ENCODE measurements at regions of chr1 and their contacts with region 1.

Region 1: DNA sequence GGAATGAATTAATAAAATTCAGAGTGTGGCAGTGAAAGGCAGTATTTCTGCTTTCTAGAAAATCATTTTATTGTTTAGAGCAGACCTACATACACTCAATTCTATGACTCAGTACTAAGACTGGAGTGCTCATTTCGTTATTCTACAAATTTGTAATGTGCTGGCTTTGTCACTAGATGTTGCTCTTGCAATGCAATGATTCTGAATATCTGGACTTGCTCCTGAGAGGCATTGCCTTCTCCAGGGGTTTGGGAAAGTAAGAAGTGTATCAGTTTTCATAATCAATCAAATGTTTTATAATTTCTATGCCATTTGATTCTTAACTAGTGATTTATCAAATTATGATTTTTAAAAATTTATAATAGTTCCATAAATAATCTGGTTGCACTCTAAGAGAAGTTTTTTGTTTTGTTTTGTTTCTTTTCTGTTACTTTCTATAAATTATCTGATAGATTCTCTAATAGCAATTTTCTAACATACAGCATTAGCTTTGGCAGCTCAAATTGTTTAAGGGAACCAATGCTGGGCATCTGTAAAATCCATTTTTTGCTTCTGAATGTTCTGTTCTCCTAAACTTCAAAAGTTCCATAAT is 280.5 kb upstream of the SGIP1 start:
- DNase-seq: peak; percentile 59
- CTCF ChIP-seq: peak; percentile 75

Region 2: DNA sequence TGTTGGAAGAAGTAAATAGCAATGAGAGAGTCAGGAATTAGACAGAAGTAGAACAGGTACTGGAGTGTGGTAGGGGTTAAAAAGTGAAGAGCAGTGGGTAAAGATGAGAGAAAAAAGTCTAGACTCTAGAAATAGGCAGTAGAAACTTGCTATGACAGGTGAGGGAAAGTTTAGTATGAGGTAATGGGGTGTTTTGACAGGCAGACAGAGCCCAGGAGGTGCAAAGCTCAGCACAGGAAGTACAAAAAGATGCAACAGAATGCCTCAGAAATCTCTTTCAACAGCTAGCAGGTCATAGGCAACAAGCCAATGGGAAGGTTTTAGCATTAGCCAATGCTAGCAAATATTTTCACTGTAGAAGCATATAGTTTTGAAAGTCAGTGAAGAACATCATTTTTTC is 38.5 kb before region 1 on chr1:
- CTCF ChIA-PET with region 1: no interaction called
- POLR2A ChIA-PET with region 1: no interaction called
- DNase-seq: peak; percentile 13
- CTCF ChIP-seq: no peak

Region 3: GRCh38 chr1:66271216-66271903 is 17.9 kb after region 1 on chr1:
- CTCF ChIA-PET with region 1: interaction called, 12 read pairs
- POLR2A ChIA-PET with region 1: no interaction called
- DNase-seq: no peak
- CTCF ChIP-seq: no peak

Measured in GM10248 (cell line).